Sigmoid colon (tissue), 7 donors: ENCODE measurements at regions of chr13 and their contacts with region 1.

Region 1: GRCh38 chr13:35857769-35858168 is 273.4 kb downstream of the DCLK1 start:
- DNase-seq: no peak
- H3K4me3 ChIP-seq: no peak overlapping the region
- H3K27ac ChIP-seq: peak overlapping the region; percentile 78 to 90 (median 87)
- H3K4me1 ChIP-seq: peaks cover 0 to 55% (median 37%) of the 10 kb centered on the region in 4 donors
- H3K27me3 ChIP-seq: no peaks in the 10 kb centered on the region
- CTCF ChIP-seq: no peak
- EP300 ChIP-seq: no peak
- POLR2A ChIP-seq: no peak

Region 2: GRCh38 chr13:35781036-35782000 is 76.5 kb before region 1 on chr13:
- intact Hi-C with region 1: loop called (anchors 2 kb)
- DNase-seq: no peak
- H3K4me3 ChIP-seq: no peak overlapping the region
- H3K27ac ChIP-seq: peak overlapping the region in 3 of 4 donors; percentile 14 to 39 (median 15)
- H3K4me1 ChIP-seq: peaks cover 0 to 25% (median 21%) of the 10 kb centered on the region in 4 donors
- H3K27me3 ChIP-seq: no peaks in the 10 kb centered on the region
- CTCF ChIP-seq: no peak
- EP300 ChIP-seq: no peak
- POLR2A ChIP-seq: no peak

Region 3: DNA sequence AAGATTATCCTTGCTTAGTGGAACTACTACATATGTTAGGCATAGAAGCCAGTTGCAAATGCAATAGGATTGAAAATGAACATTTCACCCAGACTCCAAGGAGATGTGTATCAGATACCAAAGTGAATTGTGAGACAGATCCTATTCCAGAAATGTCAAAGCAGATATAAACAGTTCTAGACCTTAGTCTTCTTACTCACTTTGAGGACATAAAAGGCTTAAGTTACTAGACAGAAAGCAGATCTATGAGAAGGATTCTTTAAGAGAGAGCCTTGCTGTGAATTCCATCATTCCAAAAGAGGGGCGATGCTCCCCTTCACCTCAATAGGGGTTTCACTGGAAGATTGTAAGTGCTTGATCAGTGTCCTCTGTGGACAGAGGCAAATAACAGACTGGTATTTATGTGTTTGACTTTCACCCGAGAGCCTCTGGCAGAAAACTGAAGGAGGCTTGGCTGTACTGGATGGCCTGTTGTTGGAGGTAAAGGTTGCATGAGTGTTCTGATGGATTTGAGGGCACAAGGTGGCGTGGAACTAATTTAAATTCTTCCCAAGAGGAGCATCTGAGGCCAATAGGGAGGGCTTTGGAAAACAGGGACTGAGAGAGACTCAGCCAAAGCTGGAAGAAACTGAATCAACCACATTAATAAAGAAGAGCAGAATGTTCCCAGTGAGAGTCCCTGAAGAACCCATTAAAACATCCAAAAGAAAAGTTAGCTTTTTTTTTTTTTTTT is 78.6 kb after region 1 on chr13:
- intact Hi-C with region 1: loop called (anchors 2 kb)
- DNase-seq: peak; percentile 75
- H3K4me3 ChIP-seq: no peak overlapping the region
- H3K27ac ChIP-seq: peak overlapping the region in 3 of 4 donors; percentile 78 to 81 (median 79)
- H3K4me1 ChIP-seq: peaks cover 0 to 39% (median 26%) of the 10 kb centered on the region in 4 donors
- H3K27me3 ChIP-seq: no peaks in the 10 kb centered on the region
- CTCF ChIP-seq: no peak
- EP300 ChIP-seq: peak in 3 of 4 donors; percentile 12 to 37 (median 31)
- POLR2A ChIP-seq: no peak